WTC11 (cell line): ENCODE measurements at regions of chr18 and their contacts with region 1.

Region 1: DNA sequence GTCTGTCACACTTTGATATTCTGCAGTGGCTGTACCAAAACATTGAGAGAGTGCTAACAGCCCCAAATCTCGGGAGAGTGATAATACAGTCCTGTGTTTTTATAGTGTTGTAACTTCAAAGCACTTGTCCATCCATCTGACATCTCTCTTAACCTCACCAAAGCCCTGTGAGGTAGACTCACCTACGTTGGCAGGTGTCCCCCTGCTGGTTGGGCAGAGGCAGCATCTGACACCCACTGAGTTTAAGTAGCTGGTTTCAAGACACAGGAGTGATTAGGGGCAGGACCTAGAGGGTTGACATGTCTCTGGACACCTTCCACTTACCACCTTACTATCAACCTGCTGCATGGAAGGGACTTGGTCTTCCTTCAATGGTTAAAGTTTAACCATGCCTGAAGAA is 22.9 kb downstream of the COLEC12 start:
- DNase-seq: peak; percentile 56
- ATAC-seq: peak; percentile 38; the same call in 1 of the 2 replicates
- H3K4me3 Mint-ChIP-seq: no peak overlapping the region
- H3K27ac Mint-ChIP-seq: no peak overlapping the region
- H3K4me1 Mint-ChIP-seq: peaks cover 54% of the 10 kb centered on the region
- H3K27me3 Mint-ChIP-seq: no peaks in the 10 kb centered on the region; the same call in 1 of the 2 replicates
- CTCF ChIP-seq: peak; percentile 31

Region 2: DNA sequence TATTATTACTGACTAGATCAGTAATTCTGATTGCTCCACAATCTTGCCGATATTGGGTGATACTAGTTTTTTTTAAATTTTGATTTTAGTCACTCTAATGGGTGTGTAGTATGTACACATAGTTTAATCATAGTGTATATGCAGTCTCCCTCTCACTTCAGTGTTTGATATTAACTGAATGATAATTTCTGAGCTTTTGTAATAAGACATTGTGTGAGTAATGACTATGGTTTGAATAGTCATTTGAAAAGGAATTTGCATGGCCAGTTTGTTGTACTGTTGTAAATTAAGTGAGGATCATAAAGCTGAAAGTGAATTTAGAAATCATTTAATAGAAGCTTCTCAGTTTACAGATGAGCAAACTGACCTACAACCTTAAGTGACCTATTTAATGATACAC is 285.8 kb before region 1 on chr18:
- CTCF ChIA-PET with region 1: no interaction called
- POLR2A ChIA-PET with region 1: no interaction called
- DNase-seq: no peak
- ATAC-seq: no peak
- H3K4me3 Mint-ChIP-seq: no peak overlapping the region
- H3K27ac Mint-ChIP-seq: no peak overlapping the region
- H3K4me1 Mint-ChIP-seq: peaks cover 3% of the 10 kb centered on the region; the same call in 1 of the 2 replicates
- H3K27me3 Mint-ChIP-seq: no peaks in the 10 kb centered on the region
- CTCF ChIP-seq: no peak

Region 3: DNA sequence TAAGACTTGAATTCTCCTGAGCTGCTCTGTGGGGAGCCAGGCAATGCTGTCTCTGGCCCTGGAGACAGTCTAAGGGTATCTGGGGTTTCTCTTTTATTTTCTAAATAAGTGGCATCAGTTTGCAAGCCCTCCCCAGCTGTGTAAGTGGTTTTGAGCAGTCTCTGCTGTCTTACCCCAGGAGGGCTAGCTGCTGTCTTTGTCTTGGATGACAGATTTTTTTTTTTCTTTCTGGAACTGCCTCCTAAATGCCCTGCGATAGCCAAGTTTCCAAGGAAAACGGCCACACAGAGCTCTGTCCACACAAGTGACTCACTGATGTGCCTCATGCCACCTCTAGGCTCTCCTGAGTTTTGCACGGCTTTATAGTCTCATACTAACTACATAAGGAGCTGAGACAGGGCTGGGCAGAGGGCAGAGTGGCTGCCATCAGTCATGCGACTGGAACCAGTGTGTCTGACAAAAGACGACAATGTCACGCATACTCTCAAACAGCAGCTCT is 172.5 kb before region 1 on chr18:
- CTCF ChIA-PET with region 1: interaction called, 19 read pairs
- POLR2A ChIA-PET with region 1: no interaction called
- DNase-seq: no peak
- ATAC-seq: peak; percentile 77
- H3K4me3 Mint-ChIP-seq: no peak overlapping the region
- H3K27ac Mint-ChIP-seq: peak overlapping the region; percentile 41
- H3K4me1 Mint-ChIP-seq: peaks cover 43% of the 10 kb centered on the region
- H3K27me3 Mint-ChIP-seq: no peaks in the 10 kb centered on the region
- CTCF ChIP-seq: no peak

Region 4: GRCh38 chr18:598124-598589 is 120.6 kb after region 1 on chr18:
- CTCF ChIA-PET with region 1: no interaction called
- POLR2A ChIA-PET with region 1: no interaction called
- DNase-seq: no peak
- ATAC-seq: no peak
- H3K4me3 Mint-ChIP-seq: no peak overlapping the region
- H3K27ac Mint-ChIP-seq: no peak overlapping the region
- H3K4me1 Mint-ChIP-seq: peaks cover 12% of the 10 kb centered on the region
- H3K27me3 Mint-ChIP-seq: peaks cover 24% of the 10 kb centered on the region
- CTCF ChIP-seq: no peak

Region 5: GRCh38 chr18:666177-666576 is 188.6 kb after region 1 on chr18:
- CTCF ChIA-PET with region 1: no interaction called
- POLR2A ChIA-PET with region 1: no interaction called
- DNase-seq: peak; percentile 55
- ATAC-seq: peak; percentile 94
- H3K4me3 Mint-ChIP-seq: no peak overlapping the region
- H3K27ac Mint-ChIP-seq: no peak overlapping the region
- H3K4me1 Mint-ChIP-seq: no peaks in the 10 kb centered on the region
- H3K27me3 Mint-ChIP-seq: no peaks in the 10 kb centered on the region
- CTCF ChIP-seq: peak; percentile 38; the same call in 1 of the 2 replicates